ENCODE measurements at regions of chr2 and their contacts with region 1.

Region 1: GRCh38 chr2:32063310-32064161 is at the start of gene SPAST:
- DNase-seq: peak; percentile 96
- ATAC-seq: peak; percentile 93
- H3K4me3 Mint-ChIP-seq: peak within 1 kb of the TSS; percentile 97
- H3K27ac Mint-ChIP-seq: peak within 1 kb of the TSS; percentile 93
- H3K4me1 Mint-ChIP-seq: peaks cover 30% of the 10 kb centered on the region
- H3K27me3 Mint-ChIP-seq: no peaks in the 10 kb centered on the region
- CTCF ChIP-seq: no peak
- total RNA-seq, gene SPAST: 17.6 and 20.8 TPM in 2 replicates

Region 2: DNA sequence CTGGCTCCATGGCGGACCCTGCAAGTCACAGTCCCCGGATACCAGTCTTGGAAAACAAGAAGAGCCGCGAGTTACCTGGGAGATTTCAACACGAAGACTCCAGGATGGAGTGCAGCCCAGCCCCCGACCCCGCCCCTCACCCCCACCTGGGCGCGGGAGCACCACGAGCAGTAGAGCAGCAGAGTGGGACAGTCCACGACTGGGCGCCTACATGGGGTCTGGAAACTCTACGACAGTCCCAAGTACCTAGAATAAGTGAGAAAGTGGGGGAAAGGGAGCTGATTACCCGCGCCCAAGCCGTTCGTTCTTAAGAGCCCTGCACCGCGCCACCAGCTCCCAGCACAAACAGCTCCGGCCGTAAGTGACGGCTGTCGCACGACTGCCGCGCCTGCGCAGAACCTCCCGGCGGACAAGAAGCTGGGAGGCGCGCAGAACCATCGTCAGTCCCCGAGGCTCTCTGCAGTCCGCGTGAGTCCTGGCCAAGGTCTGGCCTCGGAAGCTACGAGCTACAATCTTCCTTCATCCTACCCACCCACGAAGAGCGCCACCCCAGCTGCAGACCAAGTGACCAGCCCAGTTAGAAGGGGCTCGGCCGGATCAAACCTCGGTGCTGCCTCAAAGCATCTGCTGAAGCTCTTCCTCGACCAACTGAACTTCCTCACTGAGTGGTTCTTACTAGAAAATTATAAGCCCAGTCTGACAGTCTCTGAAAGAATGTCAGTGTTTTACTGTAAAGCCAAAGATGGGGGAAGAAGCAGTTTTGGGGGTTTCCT is 23.9 kb before region 1 on chr2 and contains the start of gene DPY30:
- CTCF ChIA-PET with region 1: interaction called, 8 read pairs
- POLR2A ChIA-PET with region 1: interaction called, 106 read pairs
- intact Hi-C with region 1: loop called (anchors 1 kb)
- DNase-seq: peak; percentile 88
- ATAC-seq: peak; percentile 92
- H3K4me3 Mint-ChIP-seq: peak within 1 kb of the TSS; percentile 84
- H3K27ac Mint-ChIP-seq: peak within 1 kb of the TSS; percentile 91
- H3K4me1 Mint-ChIP-seq: peaks cover 17% of the 10 kb centered on the region
- H3K27me3 Mint-ChIP-seq: no peaks in the 10 kb centered on the region
- CTCF ChIP-seq: no peak
- total RNA-seq, gene DPY30: 36.2 and 37.6 TPM in 2 replicates

Region 3: GRCh38 chr2:32277674-32278482 is 214.3 kb after region 1 on chr2 and contains the start of gene YIPF4:
- CTCF ChIA-PET with region 1: no interaction called
- POLR2A ChIA-PET with region 1: no interaction called
- intact Hi-C with region 1: loop called (anchors 5 kb)
- DNase-seq: peak; percentile 92
- ATAC-seq: peak; percentile 98
- H3K4me3 Mint-ChIP-seq: peak within 1 kb of the TSS; percentile 90
- H3K27ac Mint-ChIP-seq: peak within 1 kb of the TSS; percentile 94
- H3K4me1 Mint-ChIP-seq: peaks cover 23% of the 10 kb centered on the region
- H3K27me3 Mint-ChIP-seq: peaks cover 9% of the 10 kb centered on the region
- CTCF ChIP-seq: no peak
- total RNA-seq, gene YIPF4: 25.6 and 27.2 TPM in 2 replicates

Region 4: DNA sequence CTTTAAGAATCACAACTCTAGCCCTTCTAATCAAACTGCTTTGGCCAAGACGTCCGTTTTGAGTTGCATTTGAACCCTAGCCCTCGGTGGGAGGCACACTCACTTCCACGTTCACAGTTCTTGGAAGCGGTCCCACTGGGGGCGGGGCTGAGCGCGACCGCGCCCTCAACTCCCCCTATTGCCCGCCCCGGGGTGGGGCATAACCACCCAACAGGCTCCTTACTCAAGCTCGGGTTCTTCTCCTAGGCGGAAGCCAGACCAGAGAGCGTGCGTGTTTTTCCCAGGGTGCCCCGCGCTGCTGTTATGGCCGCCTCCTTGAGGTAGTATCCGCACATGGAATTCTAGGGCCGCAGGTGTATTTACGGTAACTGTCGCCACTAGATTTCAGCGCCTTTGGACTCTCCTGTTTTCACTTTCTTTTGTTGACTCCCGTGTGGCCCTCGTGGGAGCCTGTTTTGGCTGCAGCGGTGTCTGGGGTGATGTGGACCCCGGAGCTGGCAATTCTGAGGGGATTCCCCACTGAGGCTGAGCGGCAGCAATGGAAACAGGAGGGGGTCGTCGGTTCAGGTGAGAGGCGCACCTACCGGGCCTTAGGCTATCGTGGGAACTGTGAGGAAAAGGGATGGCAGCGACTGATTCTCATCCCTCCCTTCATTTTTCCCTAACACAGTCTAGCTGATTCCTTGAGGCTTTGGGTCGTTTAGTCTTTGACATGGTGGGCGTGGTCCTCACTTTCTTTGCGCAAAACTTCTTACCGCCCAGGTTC is 564.5 kb after region 1 on chr2 and contains the start of gene TTC27:
- CTCF ChIA-PET with region 1: no interaction called
- POLR2A ChIA-PET with region 1: no interaction called
- intact Hi-C with region 1: loop called (anchors 10 kb)
- DNase-seq: peak; percentile 93
- ATAC-seq: peak; percentile 100
- H3K4me3 Mint-ChIP-seq: peak within 1 kb of the TSS; percentile 97
- H3K27ac Mint-ChIP-seq: peak within 1 kb of the TSS; percentile 93
- H3K4me1 Mint-ChIP-seq: peaks cover 27% of the 10 kb centered on the region
- H3K27me3 Mint-ChIP-seq: no peaks in the 10 kb centered on the region
- CTCF ChIP-seq: no peak
- total RNA-seq, gene TTC27: 34.8 and 36.3 TPM in 2 replicates